ENCODE measurements at regions of chr1 and their contacts with region 1.

Region 1: GRCh38 chr1:67053785-67054772 is at the start of gene SLC35D1:
- DNase-seq: peak; percentile 70 to 79
- ATAC-seq: peak; percentile 84 to 97 (median 90)
- H3K4me3 ChIP-seq: peak within 1 kb of the TSS; percentile 62 to 94 (median 82)
- H3K27ac ChIP-seq: peak within 1 kb of the TSS; percentile 91 to 99 (median 98)
- H3K4me1 ChIP-seq: peaks cover 5 to 29% (median 25%) of the 10 kb centered on the region in 9 donors
- H3K27me3 ChIP-seq: no peaks in the 10 kb centered on the region
- CTCF ChIP-seq: no peak
- total RNA-seq, gene SLC35D1: 4.4 to 5.8 (median 4.9) TPM

Region 2: GRCh38 chr1:66752000-66752592 is 302.0 kb before region 1 on chr1 and contains the start of gene DYNLT5:
- intact Hi-C with region 1: loop called in 1 of 10 experiments (anchors 10 kb)
- DNase-seq: peak; percentile 70 to 74
- ATAC-seq: peak; percentile 92 to 97 (median 96)
- H3K4me3 ChIP-seq: peak within 1 kb of the TSS; percentile 33 to 64 (median 58)
- H3K27ac ChIP-seq: peak within 1 kb of the TSS; percentile 41 to 89 (median 81)
- H3K4me1 ChIP-seq: peaks cover 3 to 33% (median 20%) of the 10 kb centered on the region in 9 donors
- H3K27me3 ChIP-seq: peaks cover 0 to 19% (median 6%) of the 10 kb centered on the region in 7 donors
- CTCF ChIP-seq: peak in 7 of 9 donors; percentile 1 to 58 (median 38)
- total RNA-seq, gene DYNLT5: 0.89 to 4.2 (median 1.5) TPM

Region 3: DNA sequence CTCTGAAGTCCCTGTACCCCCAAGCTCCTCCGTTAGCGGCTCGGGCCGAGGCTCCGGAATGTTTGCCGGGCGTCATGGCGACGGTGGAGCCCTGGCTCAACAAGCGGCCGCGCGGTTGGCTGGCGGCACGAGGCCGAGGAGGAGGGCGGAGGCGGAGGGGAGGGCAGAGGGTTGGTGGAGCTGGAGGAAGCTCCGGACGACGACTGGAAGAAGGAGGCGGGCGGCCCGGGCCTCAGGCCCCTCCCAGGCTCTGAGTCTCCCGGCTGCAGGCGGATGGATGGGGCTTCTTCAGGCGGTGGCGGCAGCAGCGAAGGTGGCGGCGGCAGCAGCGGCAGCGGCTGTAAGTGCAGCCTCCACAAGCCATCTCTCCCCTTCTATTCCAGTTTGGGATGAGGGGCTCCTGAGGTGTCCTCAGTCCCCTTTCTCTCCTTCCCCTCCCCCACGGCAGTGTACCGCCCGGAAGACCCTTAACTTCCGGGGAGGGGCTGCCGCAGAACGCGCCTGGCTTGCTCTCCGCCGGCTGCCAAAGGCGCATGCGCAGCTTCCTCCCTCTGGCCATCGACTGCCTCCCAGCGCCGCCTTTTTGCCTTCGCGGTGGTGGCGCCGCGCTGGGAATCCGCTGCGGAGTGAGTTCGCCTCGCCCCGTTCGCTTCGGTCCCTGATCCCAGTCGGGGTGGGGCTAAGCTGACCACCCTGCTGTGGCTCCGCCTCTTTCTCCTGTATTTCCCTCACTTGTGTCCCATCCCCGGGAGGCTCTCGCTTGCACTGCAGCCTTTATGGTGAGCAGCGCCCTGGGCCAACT is 129.1 kb before region 1 on chr1 and contains the starts of genes DNAI4 and MIER1:
- intact Hi-C with region 1: loop called in 5 of 10 experiments (anchors 5 to 10 kb)
- DNase-seq: peak; percentile 98
- ATAC-seq: peak; percentile 97 to 99 (median 98)
- H3K4me3 ChIP-seq: peak within 1 kb of the TSS; percentile 53 to 93 (median 77)
- H3K27ac ChIP-seq: peak within 1 kb of the TSS; percentile 85 to 96 (median 92)
- H3K4me1 ChIP-seq: peaks cover 0 to 51% (median 36%) of the 10 kb centered on the region in 9 donors
- H3K27me3 ChIP-seq: no peaks in the 10 kb centered on the region
- CTCF ChIP-seq: peak in 4 of 9 donors; percentile 17 to 51 (median 26)
- total RNA-seq, gene DNAI4: 8.0 to 24.5 (median 14.4) TPM
- total RNA-seq, gene MIER1: 16.9 to 22.4 (median 20.1) TPM

Region 4: DNA sequence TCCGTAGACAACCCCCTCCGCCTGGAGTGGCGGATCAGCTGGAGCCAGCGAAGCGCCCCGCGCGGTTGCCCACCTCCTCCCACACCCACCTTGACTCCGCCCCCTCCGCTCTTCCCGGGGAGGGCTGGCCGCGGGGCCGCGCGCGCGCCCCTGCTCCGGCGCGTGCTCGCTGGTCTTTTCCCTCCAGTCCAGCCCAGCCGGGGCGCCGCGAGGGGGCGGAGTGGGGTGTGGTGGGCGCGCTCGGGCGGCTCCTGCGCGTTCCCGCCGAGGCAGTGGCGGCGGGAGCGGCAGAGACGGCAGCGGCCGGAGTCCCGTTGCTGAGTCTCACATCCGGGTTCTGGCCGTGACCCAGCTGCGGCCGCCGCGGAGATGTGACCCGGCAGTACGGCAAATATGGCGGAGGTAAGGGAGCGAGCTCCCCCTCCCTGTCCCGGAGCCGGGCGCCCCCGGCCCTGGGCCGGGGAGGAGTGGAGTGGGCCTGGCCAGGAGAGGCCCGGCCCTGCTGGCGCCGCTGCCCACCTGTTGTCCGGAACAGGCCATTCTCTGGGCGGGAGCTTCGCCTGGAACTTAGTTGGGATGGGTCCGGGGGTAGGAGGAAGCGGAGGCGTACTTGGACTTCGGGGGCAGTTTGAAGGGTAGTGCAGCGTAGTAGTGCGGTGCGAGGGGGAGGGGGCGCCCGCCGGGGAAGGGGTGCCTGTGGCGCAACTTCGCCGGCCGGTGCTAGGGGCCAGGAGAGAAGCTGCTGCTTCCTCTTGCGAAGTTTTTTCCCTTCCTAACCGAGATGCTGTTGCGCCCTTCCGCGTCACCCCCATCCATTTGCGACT is 123.9 kb before region 1 on chr1:
- intact Hi-C with region 1: loop called in 4 of 10 experiments (anchors 5 to 10 kb)
- DNase-seq: peak; percentile 95 to 97
- ATAC-seq: peak; percentile 83 to 94 (median 88)
- H3K4me3 ChIP-seq: peak overlapping the region; percentile 57 to 86 (median 77)
- H3K27ac ChIP-seq: peak overlapping the region; percentile 90 to 98 (median 95)
- H3K4me1 ChIP-seq: peaks cover 3 to 78% (median 62%) of the 10 kb centered on the region in 9 donors
- H3K27me3 ChIP-seq: no peaks in the 10 kb centered on the region
- CTCF ChIP-seq: peak; percentile 15 to 71 (median 49)

Region 5: GRCh38 chr1:67005068-67005467 is 49.0 kb before region 1 on chr1:
- intact Hi-C with region 1: loop called in 4 of 10 experiments (anchors 5 kb)
- DNase-seq: peak; percentile 13 to 29
- ATAC-seq: peak in 3 of 8 donors; percentile 32 to 51 (median 41)
- H3K4me3 ChIP-seq: no peak overlapping the region
- H3K27ac ChIP-seq: peak overlapping the region in 1 of 10 donors; percentile 19
- H3K4me1 ChIP-seq: peaks cover 2 to 33% (median 19%) of the 10 kb centered on the region in 9 donors
- H3K27me3 ChIP-seq: no peaks in the 10 kb centered on the region
- CTCF ChIP-seq: no peak

Region 6: GRCh38 chr1:67031121-67031858 is 22.8 kb before region 1 on chr1:
- intact Hi-C with region 1: loop called in 1 of 10 experiments (anchors 1 kb)
- DNase-seq: peak in 1 of 2 donors; percentile 13
- ATAC-seq: peak; percentile 65 to 96 (median 78)
- H3K4me3 ChIP-seq: no peak overlapping the region
- H3K27ac ChIP-seq: peak overlapping the region in 6 of 10 donors; percentile 1 to 48 (median 35)
- H3K4me1 ChIP-seq: peaks cover 0 to 21% (median 17%) of the 10 kb centered on the region in 9 donors
- H3K27me3 ChIP-seq: no peaks in the 10 kb centered on the region
- CTCF ChIP-seq: no peak

Region 7: GRCh38 chr1:67097305-67097704 is 43.2 kb after region 1 on chr1:
- intact Hi-C with region 1: no loop called
- DNase-seq: no peak
- ATAC-seq: no peak
- H3K4me3 ChIP-seq: no peak overlapping the region
- H3K27ac ChIP-seq: no peak overlapping the region
- H3K4me1 ChIP-seq: no peaks in the 10 kb centered on the region
- H3K27me3 ChIP-seq: peaks cover 0 to 18% (median 7%) of the 10 kb centered on the region in 7 donors
- CTCF ChIP-seq: no peak

Region 8: DNA sequence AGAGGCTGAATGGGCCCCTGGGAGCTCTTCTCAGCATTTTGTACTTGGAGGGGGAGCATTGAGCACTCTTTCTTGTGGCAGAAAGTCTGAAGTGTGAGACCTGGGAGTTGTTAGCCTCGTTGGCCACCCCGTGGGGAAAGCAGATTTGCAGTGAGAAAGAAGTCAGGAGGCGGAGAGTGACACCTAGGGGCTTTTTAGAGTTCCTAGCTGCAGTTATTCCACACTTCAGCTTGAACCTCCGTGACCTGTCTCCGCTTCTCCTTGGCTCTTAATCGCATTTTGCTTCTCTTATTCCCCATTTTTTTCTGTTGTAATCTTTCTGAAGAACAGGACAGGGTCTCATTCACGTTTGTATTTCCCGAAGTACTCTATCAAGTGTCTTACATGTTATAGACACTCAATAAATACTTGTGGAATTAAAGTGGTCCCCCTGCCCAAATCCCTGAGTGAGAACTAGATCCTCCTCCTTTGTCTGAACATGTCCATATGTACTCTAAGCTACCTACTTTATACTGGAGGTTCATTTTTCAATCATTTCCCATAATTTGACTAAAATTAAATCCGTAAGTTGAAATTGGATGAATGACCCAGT is 95.2 kb after region 1 on chr1:
- intact Hi-C with region 1: loop called in 2 of 10 experiments (anchors 5 to 10 kb)
- DNase-seq: peak; percentile 22 to 68
- ATAC-seq: peak; percentile 81 to 95 (median 90)
- H3K4me3 ChIP-seq: no peak overlapping the region
- H3K27ac ChIP-seq: no peak overlapping the region
- H3K4me1 ChIP-seq: peaks cover 0 to 10% (median 5%) of the 10 kb centered on the region in 9 donors
- H3K27me3 ChIP-seq: peaks cover 0 to 17% (median 4%) of the 10 kb centered on the region in 7 donors
- CTCF ChIP-seq: peak; percentile 60 to 90 (median 78)

Measured in heart right ventricle (tissue), 16 donors.